Caco-2 (cell line): ENCODE measurements at regions of chr6 and their contacts with region 1.

Region 1: GRCh38 chr6:55319961-55320695 is 7.1 kb upstream of the GFRAL start:
- DNase-seq: peak; percentile 75 to 81
- H3K4me3 ChIP-seq: no peak overlapping the region
- H3K4me3 Mint-ChIP-seq: peak overlapping the region; percentile 65
- H3K27ac Mint-ChIP-seq: peak overlapping the region; percentile 100
- H3K4me1 ChIP-seq: peaks cover 28% of the 10 kb centered on the region
- H3K4me1 Mint-ChIP-seq: peaks cover 32% of the 10 kb centered on the region
- H3K27me3 ChIP-seq: no peaks in the 10 kb centered on the region
- H3K27me3 Mint-ChIP-seq: no peaks in the 10 kb centered on the region
- CTCF ChIP-seq: no peak

Region 2: GRCh38 chr6:54559136-54559535 is 761.0 kb before region 1 on chr6:
- CTCF ChIA-PET with region 1: no interaction called
- POLR2A ChIA-PET with region 1: no interaction called
- intact Hi-C with region 1: no loop called
- DNase-seq: no peak
- H3K4me3 ChIP-seq: no peak overlapping the region
- H3K4me3 Mint-ChIP-seq: no peak overlapping the region
- H3K27ac Mint-ChIP-seq: no peak overlapping the region
- H3K4me1 ChIP-seq: no peaks in the 10 kb centered on the region
- H3K4me1 Mint-ChIP-seq: no peaks in the 10 kb centered on the region
- H3K27me3 ChIP-seq: no peaks in the 10 kb centered on the region
- H3K27me3 Mint-ChIP-seq: no peaks in the 10 kb centered on the region
- CTCF ChIP-seq: no peak

Region 3: DNA sequence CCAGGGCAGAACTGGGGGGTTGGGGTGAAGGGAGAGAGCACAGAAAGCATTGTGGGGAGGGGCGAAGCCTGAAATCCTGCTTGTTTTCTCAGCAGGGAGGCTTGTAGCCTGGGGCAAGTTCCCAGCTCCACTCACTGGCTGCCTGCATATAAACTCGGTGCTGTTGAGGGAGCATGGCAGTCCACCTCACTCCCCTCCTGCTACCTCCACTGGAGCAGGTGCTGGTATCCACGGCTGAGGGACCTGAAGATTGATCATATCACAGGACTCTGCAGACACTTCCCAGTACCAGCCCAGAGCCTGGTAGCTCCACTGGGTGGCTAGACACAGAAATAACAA is 211.4 kb before region 1 on chr6:
- CTCF ChIA-PET with region 1: no interaction called
- POLR2A ChIA-PET with region 1: no interaction called
- intact Hi-C with region 1: no loop called
- DNase-seq: no peak
- H3K4me3 ChIP-seq: no peak overlapping the region
- H3K4me3 Mint-ChIP-seq: no peak overlapping the region
- H3K27ac Mint-ChIP-seq: no peak overlapping the region
- H3K4me1 ChIP-seq: no peaks in the 10 kb centered on the region
- H3K4me1 Mint-ChIP-seq: no peaks in the 10 kb centered on the region
- H3K27me3 ChIP-seq: no peaks in the 10 kb centered on the region
- H3K27me3 Mint-ChIP-seq: peaks cover 4% of the 10 kb centered on the region
- CTCF ChIP-seq: no peak

Region 4: GRCh38 chr6:55260181-55260580 is 59.9 kb before region 1 on chr6:
- CTCF ChIA-PET with region 1: no interaction called
- POLR2A ChIA-PET with region 1: no interaction called
- intact Hi-C with region 1: loop called (anchors 1 kb)
- DNase-seq: peak; percentile 76 to 78
- H3K4me3 ChIP-seq: no peak overlapping the region
- H3K4me3 Mint-ChIP-seq: peak overlapping the region; percentile 47
- H3K27ac Mint-ChIP-seq: peak overlapping the region; percentile 78
- H3K4me1 ChIP-seq: peaks cover 41% of the 10 kb centered on the region
- H3K4me1 Mint-ChIP-seq: peaks cover 10% of the 10 kb centered on the region
- H3K27me3 ChIP-seq: no peaks in the 10 kb centered on the region
- H3K27me3 Mint-ChIP-seq: no peaks in the 10 kb centered on the region
- CTCF ChIP-seq: no peak

Region 5: DNA sequence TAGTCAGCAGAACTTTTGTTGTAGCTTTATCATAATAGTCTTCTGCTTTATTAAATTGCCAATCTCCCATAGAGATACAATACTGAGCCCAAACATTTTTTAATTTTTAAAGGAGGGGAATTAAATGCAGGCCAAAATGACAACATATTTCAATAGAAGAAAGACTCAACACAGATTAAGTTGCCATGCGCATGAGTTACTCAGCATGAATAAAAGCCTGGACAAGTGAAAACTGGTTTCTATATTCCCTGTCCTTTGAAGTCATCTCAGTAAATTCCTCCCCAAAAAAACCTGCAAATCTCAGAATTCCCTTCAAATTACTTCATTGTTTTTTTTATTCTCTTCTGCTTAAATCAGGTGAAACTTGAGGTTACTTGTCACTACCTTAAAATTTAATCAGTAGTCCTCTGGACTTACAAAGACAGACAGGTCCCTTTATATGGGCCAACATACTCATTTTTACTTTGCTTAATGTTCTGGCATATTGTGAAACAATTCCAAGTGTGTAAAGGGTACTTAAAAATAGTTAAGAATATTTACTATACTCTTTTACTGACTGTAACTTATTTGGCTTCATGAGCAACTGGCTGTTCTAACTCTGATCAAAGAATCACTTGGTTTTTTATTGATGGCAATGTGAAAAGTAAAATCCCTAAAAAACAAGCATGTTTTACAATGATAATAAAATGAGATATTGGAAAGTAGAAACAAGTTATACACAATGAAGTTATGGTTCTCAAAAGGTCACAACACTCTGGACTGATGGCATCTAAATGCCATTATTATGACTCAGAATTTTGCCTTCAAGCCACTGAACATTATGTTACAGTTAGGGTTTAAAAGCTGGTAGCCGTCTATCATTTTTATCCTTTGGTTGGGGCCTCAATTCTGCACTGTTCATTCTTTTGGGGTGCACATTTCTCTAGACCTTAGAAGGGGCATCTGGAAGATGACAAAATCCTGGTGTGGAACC is 977.2 kb after region 1 on chr6:
- CTCF ChIA-PET with region 1: no interaction called
- POLR2A ChIA-PET with region 1: no interaction called
- intact Hi-C with region 1: no loop called
- DNase-seq: no peak
- H3K4me3 ChIP-seq: no peak overlapping the region
- H3K4me3 Mint-ChIP-seq: no peak overlapping the region
- H3K27ac Mint-ChIP-seq: no peak overlapping the region
- H3K4me1 ChIP-seq: no peaks in the 10 kb centered on the region
- H3K4me1 Mint-ChIP-seq: no peaks in the 10 kb centered on the region
- H3K27me3 ChIP-seq: no peaks in the 10 kb centered on the region
- H3K27me3 Mint-ChIP-seq: no peaks in the 10 kb centered on the region
- CTCF ChIP-seq: no peak